HEK293 (cell line): ENCODE measurements at regions of chr1 and their contacts with region 1.

Region 1: DNA sequence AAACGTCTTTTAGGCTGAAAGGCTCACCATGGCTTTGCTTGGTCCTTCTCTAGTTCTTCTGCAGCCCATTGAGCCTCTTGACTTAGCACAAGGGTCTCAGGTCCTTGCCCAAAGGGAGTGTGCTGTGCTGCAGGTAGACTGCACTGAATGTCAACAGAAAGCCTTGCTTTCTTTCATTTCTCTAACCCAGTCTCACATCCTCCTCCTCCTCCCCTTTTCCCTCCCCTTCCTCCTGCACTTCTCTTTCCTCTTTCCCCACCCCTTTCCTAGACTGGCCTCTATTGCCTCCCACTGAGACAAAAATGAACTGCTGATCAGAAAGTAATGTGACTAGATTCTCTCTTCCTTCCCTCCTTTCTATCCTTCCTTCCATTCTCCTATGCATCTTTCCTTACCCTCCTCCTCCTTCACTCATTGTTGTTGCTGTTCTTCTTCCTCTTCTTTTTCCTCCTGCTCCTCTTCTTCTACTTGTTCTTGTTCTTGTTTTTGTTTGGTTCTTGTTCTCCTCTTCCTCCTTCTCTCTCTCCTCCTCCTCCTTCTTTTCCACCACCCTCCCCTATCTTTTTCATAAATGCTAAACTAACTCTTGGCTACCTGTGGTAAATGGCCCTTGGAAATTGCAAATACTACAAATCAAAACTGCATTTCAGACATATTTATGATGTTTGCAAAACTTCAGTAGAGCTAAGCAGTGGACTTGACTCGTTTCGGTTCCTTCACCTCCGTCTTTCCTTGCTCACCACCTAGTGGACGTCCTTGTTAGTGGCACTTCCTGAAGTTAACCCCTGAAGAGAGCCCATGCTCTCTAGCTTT is at the start of gene SELL:
- H3K4me3 ChIP-seq: peak within 1 kb of the TSS; percentile 26
- H3K27ac ChIP-seq: no peak within 1 kb of the TSS
- H3K4me1 ChIP-seq: no peaks in the 10 kb centered on the region
- CTCF ChIP-seq: peak; percentile 42

Region 2: DNA sequence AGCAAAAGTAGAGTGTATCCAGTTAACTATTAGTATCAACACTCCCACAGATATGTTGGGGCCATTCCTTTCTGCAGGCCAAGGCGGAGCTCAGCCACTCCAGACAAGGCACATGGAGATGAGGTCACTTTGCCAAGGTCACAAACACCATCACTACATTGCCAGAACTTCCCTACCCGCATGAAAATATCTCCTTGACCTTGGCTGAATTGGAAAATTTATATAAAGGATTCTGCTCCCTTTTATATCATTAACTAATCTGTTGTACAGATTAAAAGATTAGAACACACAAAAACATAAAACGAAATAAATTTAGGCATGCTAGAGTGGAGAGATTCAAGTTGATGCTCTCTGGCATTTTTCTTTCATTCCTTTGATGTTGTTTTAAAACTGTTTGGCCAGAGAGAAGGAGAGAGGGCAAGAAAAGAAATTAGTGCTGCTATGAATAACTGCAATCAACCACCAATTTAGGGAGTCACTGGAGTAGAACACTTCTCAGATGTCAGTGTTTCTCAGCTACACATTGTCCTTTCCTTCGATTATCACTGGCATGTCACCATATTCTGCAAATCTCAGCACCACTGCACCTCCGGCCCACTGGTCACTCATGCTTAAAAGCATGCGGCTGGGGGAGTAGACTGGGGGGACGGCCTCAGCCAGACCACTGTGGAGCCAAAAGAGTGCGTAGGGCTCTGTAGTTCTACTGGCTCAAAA is 683.9 kb before region 1 on chr1:
- CTCF ChIA-PET with region 1: interaction called, 12 read pairs
- POLR2A ChIA-PET with region 1: no interaction called
- H3K4me3 ChIP-seq: no peak overlapping the region
- H3K27ac ChIP-seq: no peak overlapping the region
- H3K4me1 ChIP-seq: no peaks in the 10 kb centered on the region
- CTCF ChIP-seq: no peak

Region 3: GRCh38 chr1:169586395-169587255 is 125.0 kb before region 1 on chr1 and contains the start of gene F5:
- CTCF ChIA-PET with region 1: interaction called, 12 read pairs
- POLR2A ChIA-PET with region 1: no interaction called
- H3K4me3 ChIP-seq: peak within 1 kb of the TSS; percentile 3
- H3K27ac ChIP-seq: no peak within 1 kb of the TSS
- H3K4me1 ChIP-seq: no peaks in the 10 kb centered on the region
- CTCF ChIP-seq: peak; percentile 75